ENCODE measurements at regions of chr5 and their contacts with region 1.

Region 1: GRCh38 chr5:137778772-137779564 is 24.8 kb upstream of the HNRNPA0 start:
- DNase-seq: no peak
- H3K4me3 Mint-ChIP-seq: no peak overlapping the region
- H3K27ac Mint-ChIP-seq: no peak overlapping the region
- H3K4me1 Mint-ChIP-seq: no peaks in the 10 kb centered on the region
- H3K27me3 Mint-ChIP-seq: peaks cover 8% of the 10 kb centered on the region

Region 2: DNA sequence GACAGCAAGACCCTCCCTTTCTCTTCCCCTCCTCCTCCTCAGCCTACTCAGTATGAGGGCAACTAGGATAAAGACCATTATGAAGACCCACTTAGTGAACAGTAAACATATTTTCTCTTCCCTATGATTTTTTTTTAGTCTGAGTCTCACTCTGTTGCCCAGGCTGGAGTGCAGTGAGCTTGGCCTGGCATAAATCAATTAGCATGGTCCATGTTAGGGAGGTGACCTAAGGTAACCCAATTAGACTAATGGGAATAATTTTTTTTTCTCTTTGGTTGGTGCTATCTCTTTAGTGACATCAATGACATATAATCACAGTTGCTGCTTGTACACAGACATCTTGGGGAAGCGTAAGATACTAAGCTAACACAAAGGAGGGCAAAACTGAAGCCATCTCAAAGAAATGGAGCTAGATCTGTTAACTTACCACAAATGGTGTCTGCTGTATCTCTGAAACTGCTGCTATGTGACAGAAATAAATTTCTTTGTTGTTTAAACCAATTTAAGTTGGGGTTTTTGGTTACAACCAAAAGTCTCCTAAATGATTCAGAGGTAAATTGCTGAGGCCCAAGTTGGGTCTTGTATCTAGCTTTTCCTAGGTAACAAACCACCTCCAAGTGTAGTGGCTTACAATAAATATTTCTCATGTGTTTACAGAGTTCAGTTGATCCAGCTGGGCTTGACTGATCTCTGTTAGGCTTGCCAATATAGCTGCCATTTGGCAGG is 123.6 kb after region 1 on chr5:
- intact Hi-C with region 1: no loop called
- DNase-seq: no peak
- H3K4me3 Mint-ChIP-seq: no peak overlapping the region
- H3K27ac Mint-ChIP-seq: no peak overlapping the region
- H3K4me1 Mint-ChIP-seq: peaks cover 8% of the 10 kb centered on the region
- H3K27me3 Mint-ChIP-seq: peaks cover 5% of the 10 kb centered on the region

Region 3: DNA sequence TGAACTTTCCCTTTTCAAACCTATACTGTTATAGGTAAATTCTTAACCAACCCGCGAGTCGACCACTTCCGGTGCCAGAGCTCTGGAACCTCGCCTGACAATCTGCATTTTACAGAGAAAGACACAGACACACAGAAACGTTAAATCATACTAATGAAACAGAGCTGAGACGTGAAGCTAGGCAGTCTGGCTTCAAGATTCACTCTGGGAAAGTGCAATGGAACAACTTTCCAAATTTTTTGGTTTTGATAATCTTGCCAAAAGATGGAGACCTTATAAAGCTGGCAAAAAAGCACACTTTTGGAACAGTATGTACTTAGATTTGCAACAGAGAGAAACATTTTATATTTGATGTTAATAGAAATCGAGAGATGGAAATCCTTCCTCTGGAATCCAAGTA is 289.0 kb after region 1 on chr5:
- intact Hi-C with region 1: loop called (anchors 1 kb)
- DNase-seq: no peak
- H3K4me3 Mint-ChIP-seq: no peak overlapping the region
- H3K27ac Mint-ChIP-seq: no peak overlapping the region
- H3K4me1 Mint-ChIP-seq: peaks cover 14% of the 10 kb centered on the region
- H3K27me3 Mint-ChIP-seq: no peaks in the 10 kb centered on the region

Measured in activated T-helper 1 cell treated with anti-CD3 and anti-CD28 coated beads, Interleukin-12 subunit alpha, Interleukin-12 subunit beta, Interleukin-2, Interleukin-4 antibody, amounts not matched to agents 30 ng/mL and 10 ng/mL and 1 ng/mL, durations not matched to agents 14 hours and 24 hours and 36 hours (primary cell).